ENCODE measurements at regions of chr10 and their contacts with region 1.

Region 1: DNA sequence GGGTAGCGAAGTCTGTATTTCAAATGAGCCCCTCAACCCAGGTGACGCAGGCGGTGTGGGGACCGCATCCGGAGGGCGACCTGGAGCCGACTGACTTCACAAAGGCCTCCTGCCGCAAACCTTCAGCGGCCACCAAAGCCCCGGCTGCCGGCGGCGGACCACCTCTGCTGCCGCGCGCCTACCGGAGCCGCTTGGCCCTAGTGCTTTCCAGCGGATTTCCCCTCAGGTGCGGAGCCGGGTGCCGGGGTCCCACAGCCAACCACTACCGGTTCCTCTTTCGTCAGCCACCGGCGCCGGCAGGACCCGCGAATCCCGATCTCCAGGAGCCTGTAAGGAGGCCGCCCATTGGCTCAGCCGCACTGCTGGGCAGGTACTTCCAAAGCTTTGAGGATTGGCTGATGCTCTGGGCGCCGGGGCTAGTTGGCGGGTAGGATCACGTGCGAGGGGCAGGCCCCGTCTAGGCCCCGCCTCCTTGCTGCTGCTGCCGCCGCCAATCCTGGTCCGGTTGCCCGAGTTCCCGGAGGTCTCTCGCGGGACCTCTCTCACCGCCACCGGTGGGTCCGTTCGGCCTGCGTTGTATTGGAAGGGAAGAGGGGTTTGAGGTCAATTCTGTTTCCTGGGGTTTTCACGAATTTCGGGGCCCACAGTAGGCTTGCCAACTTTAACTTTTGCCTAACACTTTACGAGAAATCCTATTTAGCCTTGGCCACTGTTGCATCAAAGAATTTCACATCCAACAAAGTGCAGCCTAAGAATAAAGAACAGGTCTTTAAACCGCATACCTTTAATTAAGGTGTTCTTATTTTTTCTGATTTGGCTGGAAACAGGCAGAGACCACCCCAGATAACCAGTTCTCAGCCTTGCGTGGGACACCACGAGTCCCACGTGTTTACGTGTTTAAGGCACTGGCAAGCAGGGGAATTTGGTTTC is at the start of gene GSTO2:
- DNase-seq: peak; percentile 100

Region 2: GRCh38 chr10:104146882-104147281 is 122.1 kb before region 1 on chr10:
- CTCF ChIA-PET with region 1: no interaction called
- POLR2A ChIA-PET with region 1: no interaction called
- DNase-seq: no peak

Region 3: DNA sequence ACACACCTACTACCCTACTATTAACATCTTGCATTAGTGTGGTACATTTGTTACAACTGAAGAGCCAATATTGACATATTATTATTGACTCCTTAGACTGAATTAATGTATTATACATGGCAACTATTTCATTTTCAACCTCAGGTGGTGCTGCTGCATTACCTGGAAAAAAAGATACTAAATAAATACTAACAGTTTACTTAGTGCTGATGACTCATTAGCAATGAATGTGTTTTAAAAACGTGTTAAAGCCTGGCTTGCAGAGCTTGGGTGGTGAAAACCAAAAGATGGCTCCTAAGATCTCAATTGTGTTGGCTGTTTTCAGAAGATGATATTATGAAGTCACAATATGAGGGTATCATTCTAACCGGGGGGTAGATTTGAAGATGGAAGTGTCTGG is 71.6 kb before region 1 on chr10:
- CTCF ChIA-PET with region 1: no interaction called
- POLR2A ChIA-PET with region 1: no interaction called
- DNase-seq: no peak

Region 4: GRCh38 chr10:104254493-104255310 is 14.3 kb before region 1 on chr10 and contains the start of gene GSTO1:
- CTCF ChIA-PET with region 1: interaction called, 8 read pairs
- POLR2A ChIA-PET with region 1: interaction called, 23 read pairs
- DNase-seq: peak; percentile 77

Measured in HEK293T (cell line).